OCI-LY7 (cell line): ENCODE measurements at regions of chr1 and their contacts with region 1.

Region 1: GRCh38 chr1:8525558-8526275 is 207.8 kb downstream of the SLC45A1 start:
- DNase-seq: peak; percentile 92
- H3K4me3 ChIP-seq: peak overlapping the region; percentile 74
- H3K27ac ChIP-seq: peak overlapping the region; percentile 91
- H3K4me1 ChIP-seq: peaks cover 80% of the 10 kb centered on the region
- CTCF ChIP-seq: no peak

Region 2: GRCh38 chr1:8477166-8477982 is 48.3 kb before region 1 on chr1:
- CTCF ChIA-PET with region 1: no interaction called
- POLR2A ChIA-PET with region 1: interaction called, 10 read pairs
- intact Hi-C with region 1: loop called (anchors 5 kb)
- DNase-seq: peak; percentile 40
- H3K4me3 ChIP-seq: peak overlapping the region; percentile 7
- H3K27ac ChIP-seq: peak overlapping the region; percentile 64
- H3K4me1 ChIP-seq: peaks cover 72% of the 10 kb centered on the region
- CTCF ChIP-seq: no peak

Region 3: DNA sequence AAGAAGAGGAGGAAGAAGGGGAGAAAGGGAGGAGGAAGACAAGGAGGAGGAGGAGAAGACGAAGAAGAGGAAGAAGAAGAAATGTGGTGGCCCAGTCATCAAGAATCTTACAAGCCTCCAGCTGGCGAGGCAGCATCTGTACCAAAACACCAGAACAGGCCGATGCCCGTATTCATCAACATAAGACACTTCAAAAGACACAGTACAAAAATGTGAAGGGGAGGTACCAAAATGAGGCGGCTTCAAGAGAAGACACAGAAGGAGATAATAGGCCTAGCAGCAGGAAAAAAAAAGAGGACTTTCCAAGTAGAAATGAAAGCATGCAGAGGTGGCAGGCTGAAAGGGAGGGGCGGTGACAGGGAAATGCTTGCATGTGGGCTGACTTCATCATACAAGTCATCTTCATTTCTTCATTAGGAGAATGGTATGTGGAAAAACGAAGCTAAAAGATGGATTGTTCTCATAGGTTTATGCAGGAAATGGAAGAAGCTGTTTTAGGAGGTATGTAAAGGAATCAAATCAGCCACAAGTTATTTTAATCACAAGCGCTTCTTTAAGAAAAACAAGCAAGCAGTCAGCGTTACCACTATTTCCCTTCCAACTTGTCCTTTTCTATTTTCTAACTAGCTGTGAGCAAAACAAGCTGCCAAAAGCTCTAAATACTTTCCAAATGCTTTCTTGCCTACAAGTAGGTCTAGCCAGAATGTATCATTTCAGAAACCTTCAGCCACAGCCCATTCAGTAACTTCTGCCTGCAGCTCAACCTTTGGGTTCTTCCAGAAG is 15.5 kb before region 1 on chr1:
- CTCF ChIA-PET with region 1: interaction called, 3 read pairs
- POLR2A ChIA-PET with region 1: interaction called, 40 read pairs
- intact Hi-C with region 1: no loop called
- DNase-seq: peak; percentile 68
- H3K4me3 ChIP-seq: peak overlapping the region; percentile 53
- H3K27ac ChIP-seq: peak overlapping the region; percentile 88
- H3K4me1 ChIP-seq: peaks cover 84% of the 10 kb centered on the region
- CTCF ChIP-seq: no peak

Region 4: DNA sequence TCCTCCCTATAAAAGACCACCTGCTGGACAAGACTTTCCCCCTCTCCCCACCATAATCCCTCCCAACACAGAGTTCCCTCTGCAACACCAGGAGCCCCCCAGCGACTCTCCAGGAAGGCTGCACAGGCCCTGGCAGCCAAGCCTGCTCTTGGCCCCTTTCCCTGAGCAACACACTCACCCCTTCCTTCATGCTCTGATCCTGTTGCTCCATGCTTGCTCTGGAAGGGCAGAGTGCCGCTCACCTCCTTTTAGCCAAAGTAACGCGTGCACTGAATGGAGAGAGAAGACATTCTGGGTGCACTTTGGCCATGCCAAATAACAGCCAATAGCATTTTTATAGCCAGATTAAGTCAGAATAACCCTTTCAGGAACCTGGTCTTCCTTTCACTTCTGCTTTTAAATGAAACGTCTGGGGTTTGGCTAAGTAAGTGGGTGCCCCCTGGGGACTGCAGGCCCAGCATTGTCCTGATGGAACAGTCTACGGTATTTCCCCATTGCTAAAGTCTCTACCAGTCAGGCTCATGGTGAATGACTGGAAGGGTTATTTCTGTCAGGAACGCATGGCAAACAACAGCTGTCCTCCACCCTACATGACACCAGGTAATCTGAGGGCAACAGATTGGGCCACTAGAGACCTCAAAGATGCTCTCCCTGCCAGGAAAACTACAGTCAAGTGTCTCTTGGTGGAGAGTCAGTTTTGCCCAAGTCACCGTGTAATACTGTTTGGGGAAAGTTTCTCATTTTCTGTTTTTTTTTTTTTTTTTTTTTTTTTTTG is 543.8 kb after region 1 on chr1 and contains the start of gene SLC2A5:
- CTCF ChIA-PET with region 1: no interaction called
- POLR2A ChIA-PET with region 1: no interaction called
- intact Hi-C with region 1: loop called (anchors 10 kb)
- DNase-seq: peak; percentile 97
- H3K4me3 ChIP-seq: peak within 1 kb of the TSS; percentile 83
- H3K27ac ChIP-seq: peak within 1 kb of the TSS; percentile 92
- H3K4me1 ChIP-seq: peaks cover 64% of the 10 kb centered on the region
- CTCF ChIP-seq: peak; percentile 24; the same call in 1 of the 2 replicates
- total RNA-seq, gene SLC2A5: 109 and 112 TPM in 2 replicates

Region 5: DNA sequence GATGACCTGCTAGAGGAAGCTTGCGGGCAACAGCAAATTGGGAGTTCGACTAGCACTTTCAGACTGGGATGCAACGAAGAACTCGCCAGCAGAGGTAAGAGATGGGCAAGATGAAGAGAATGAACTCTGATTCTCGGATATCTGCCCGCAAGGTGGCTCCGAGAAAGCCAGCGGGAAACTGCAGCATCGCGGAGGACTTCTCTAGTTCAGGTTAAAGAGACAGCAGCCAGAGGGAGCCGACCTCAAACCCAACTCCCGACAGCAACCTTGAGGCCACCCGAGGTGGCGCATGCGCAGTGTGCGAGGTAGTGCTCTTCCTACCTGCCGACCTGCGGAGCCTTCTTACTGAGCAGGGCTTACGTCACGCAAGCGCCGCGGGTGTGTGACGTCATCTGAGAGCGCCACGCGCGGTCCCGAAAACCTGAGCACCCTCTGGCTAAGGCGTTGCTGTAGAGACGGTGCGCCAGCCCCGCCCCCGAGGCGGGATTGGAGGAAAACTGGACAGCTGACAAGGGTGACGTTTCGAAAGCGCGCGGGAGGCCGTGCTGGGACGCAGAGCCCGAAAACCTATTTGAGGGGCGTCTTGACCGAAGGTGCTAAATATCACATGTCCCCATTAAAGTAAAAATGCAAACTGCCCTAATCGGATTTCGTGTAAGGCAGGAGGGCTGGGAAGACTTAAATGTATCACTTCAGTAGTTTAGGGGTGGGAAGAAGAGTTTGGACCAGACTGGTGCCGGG is 903.1 kb after region 1 on chr1:
- CTCF ChIA-PET with region 1: no interaction called
- POLR2A ChIA-PET with region 1: no interaction called
- intact Hi-C with region 1: loop called (anchors 10 kb)
- DNase-seq: peak; percentile 100
- H3K4me3 ChIP-seq: peak overlapping the region; percentile 69
- H3K27ac ChIP-seq: peak overlapping the region; percentile 95
- H3K4me1 ChIP-seq: peaks cover 69% of the 10 kb centered on the region
- CTCF ChIP-seq: peak; percentile 58; the same call in 1 of the 2 replicates